ENCODE measurements at regions of chr19 and their contacts with region 1.

Region 1: DNA sequence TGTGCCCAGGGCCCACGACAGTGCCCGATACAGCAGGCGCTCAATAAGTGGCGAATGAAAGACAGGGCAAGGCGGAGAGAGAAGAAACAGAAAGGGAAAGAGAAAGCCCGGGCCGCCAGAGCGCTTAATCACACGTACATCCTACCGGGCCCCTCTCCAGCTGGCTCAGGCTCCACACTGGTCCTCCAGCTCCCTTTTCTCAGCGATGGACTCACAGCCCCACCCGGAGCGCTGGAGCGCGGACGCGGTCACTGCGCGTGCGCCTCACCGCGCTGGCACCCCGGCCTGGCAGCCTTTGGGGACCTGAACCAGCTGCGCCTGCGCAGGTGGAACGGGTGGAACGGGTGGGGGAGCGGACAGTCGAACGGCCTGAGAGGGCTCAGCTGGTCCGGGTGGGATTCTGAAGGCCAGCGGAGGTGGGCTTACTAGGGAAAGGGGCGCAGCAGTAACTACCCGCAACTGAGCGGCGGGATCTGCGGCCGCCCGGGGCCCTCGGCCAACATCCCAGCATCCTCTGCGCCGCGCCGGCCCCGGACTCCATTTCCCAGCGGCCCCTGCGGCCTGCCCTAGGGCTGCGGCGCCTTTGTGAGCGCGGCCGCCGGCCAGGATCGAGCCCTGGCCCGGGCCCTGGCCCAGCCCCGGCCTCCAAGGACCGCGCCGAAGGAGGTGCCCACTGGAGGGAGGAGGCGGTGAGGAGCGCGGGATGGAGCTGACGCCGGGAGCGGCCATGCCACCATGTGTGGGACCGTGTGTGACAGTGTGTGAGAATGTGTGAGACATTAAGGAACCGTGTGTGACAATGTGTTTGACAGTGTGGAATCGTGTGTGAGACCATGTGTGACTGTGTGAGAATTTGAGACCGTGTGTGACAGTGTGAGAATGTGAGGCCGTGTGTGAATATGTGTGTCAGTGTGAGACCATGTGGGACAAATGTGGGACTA is at the start of gene ZNF583:
- DNase-seq: peak; percentile 86
- H3K4me3 Mint-ChIP-seq: peak within 1 kb of the TSS; percentile 93
- H3K27ac Mint-ChIP-seq: peak within 1 kb of the TSS; percentile 96
- H3K4me1 Mint-ChIP-seq: peaks cover 23% of the 10 kb centered on the region
- H3K27me3 Mint-ChIP-seq: no peaks in the 10 kb centered on the region
- total RNA-seq, gene ZNF583: 1.4 and 2.1 TPM in 2 replicates

Region 2: GRCh38 chr19:56105090-56105701 is 298.8 kb before region 1 on chr19:
- intact Hi-C with region 1: no loop called
- DNase-seq: peak; percentile 28
- H3K4me3 Mint-ChIP-seq: no peak overlapping the region
- H3K27ac Mint-ChIP-seq: no peak overlapping the region
- H3K4me1 Mint-ChIP-seq: peaks cover 6% of the 10 kb centered on the region
- H3K27me3 Mint-ChIP-seq: no peaks in the 10 kb centered on the region

Region 3: GRCh38 chr19:56121180-56122167 is 282.6 kb before region 1 on chr19 and contains the start of gene ZNF787:
- intact Hi-C with region 1: loop called (anchors 5 kb)
- DNase-seq: peak; percentile 97
- H3K4me3 Mint-ChIP-seq: peak within 1 kb of the TSS; percentile 89
- H3K27ac Mint-ChIP-seq: peak within 1 kb of the TSS; percentile 97
- H3K4me1 Mint-ChIP-seq: peaks cover 28% of the 10 kb centered on the region
- H3K27me3 Mint-ChIP-seq: no peaks in the 10 kb centered on the region
- total RNA-seq, gene ZNF787: 41.8 and 42.6 TPM in 2 replicates

Region 4: GRCh38 chr19:56367829-56368711 is 36.0 kb before region 1 on chr19:
- intact Hi-C with region 1: loop called (anchors 2 kb)
- DNase-seq: peak; percentile 64
- H3K4me3 Mint-ChIP-seq: peak overlapping the region; percentile 85
- H3K27ac Mint-ChIP-seq: peak overlapping the region; percentile 57
- H3K4me1 Mint-ChIP-seq: peaks cover 15% of the 10 kb centered on the region
- H3K27me3 Mint-ChIP-seq: no peaks in the 10 kb centered on the region

Region 5: GRCh38 chr19:56538254-56538760 is 134.3 kb after region 1 on chr19:
- intact Hi-C with region 1: loop called (anchors 1 kb)
- DNase-seq: peak; percentile 79
- H3K4me3 Mint-ChIP-seq: peak overlapping the region; percentile 86
- H3K27ac Mint-ChIP-seq: peak overlapping the region; percentile 91
- H3K4me1 Mint-ChIP-seq: peaks cover 3% of the 10 kb centered on the region
- H3K27me3 Mint-ChIP-seq: no peaks in the 10 kb centered on the region

Region 6: DNA sequence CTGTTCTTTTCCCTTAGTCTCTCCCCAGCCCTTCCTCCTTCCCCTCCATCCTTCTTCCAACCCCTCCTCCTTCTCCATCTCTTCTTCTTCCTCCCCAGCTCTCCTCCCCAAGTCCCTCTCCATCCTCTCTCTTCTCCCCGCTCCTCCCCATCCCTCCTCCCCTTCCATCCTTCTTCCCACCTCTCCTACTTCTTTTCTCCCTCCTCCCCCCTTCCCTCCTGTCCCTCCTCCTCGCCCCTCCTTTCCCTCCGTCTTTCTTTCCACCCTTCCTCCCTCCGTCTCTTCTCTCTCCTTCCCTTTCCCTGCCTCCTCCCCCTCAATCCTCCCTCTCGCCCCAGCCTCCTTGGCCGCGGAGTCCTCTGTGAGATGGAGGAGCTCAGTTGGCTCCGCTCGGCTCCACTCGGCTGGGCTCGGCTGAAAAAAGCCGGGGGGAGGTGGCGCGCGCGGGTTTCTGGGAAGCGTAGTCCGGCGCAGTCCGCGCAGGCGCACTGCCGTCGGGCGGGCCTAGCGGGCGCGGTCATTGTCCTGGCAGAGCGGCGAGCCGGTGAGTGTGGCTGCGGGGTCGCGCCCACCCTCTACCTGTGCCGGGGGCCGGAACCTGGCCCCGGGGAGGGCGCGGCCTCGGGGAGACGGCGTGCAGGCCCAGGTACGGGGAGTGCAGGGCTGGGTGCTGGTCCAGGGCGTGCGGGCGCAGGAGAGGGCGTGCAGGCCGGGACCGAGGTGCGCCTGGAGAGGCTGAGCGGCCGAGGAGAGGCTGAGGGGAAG is 190.9 kb after region 1 on chr19 and contains the start of gene ZNF71:
- intact Hi-C with region 1: loop called (anchors 5 kb)
- DNase-seq: peak; percentile 82
- H3K4me3 Mint-ChIP-seq: peak within 1 kb of the TSS; percentile 92
- H3K27ac Mint-ChIP-seq: peak within 1 kb of the TSS; percentile 59
- H3K4me1 Mint-ChIP-seq: peaks cover 14% of the 10 kb centered on the region
- H3K27me3 Mint-ChIP-seq: no peaks in the 10 kb centered on the region
- total RNA-seq, gene ZNF71: 5.1 and 5.9 TPM in 2 replicates

Measured in activated T-helper 1 cell treated with anti-CD3 and anti-CD28 coated beads, Interleukin-12 subunit alpha, Interleukin-12 subunit beta, Interleukin-2, Interleukin-4 antibody, amounts not matched to agents 30 ng/mL and 10 ng/mL and 1 ng/mL, durations not matched to agents 14 hours and 24 hours and 36 hours (primary cell).